Gastrocnemius medialis (tissue), 4 donors: ENCODE measurements at regions of chr9 and their contacts with region 1.

Region 1: GRCh38 chr9:101398068-101398929 is at the starts of genes MRPL50 and ZNF189:
- DNase-seq: peak; percentile 99
- ATAC-seq: peak; percentile 97 to 98
- H3K4me3 ChIP-seq: peak within 1 kb of the TSS; percentile 71 to 85 (median 78)
- H3K27ac ChIP-seq: peak within 1 kb of the TSS; percentile 86 to 97 (median 90)
- H3K4me1 ChIP-seq: peaks cover 37 to 49% of the 10 kb centered on the region in 2 donors
- H3K27me3 ChIP-seq: no peaks in the 10 kb centered on the region
- CTCF ChIP-seq: no peak
- POLR2A ChIP-seq: peak; percentile 66 to 79
- total RNA-seq, gene MRPL50: 6.3 to 13.7 (median 10.2) TPM
- total RNA-seq, gene ZNF189: 9.7 to 42.8 (median 12.2) TPM

Region 2: GRCh38 chr9:101229606-101230005 is 168.7 kb before region 1 on chr9:
- in situ Hi-C with region 1: no loop called
- intact Hi-C with region 1: no loop called
- DNase-seq: no peak
- ATAC-seq: no peak
- H3K4me3 ChIP-seq: no peak overlapping the region
- H3K27ac ChIP-seq: no peak overlapping the region
- H3K4me1 ChIP-seq: no peaks in the 10 kb centered on the region
- H3K27me3 ChIP-seq: no peaks in the 10 kb centered on the region
- CTCF ChIP-seq: no peak
- POLR2A ChIP-seq: no peak

Region 3: GRCh38 chr9:101449140-101449721 is 50.9 kb after region 1 on chr9:
- in situ Hi-C with region 1: no loop called
- intact Hi-C with region 1: loop called (anchors 2 kb)
- DNase-seq: peak; percentile 29 to 63
- ATAC-seq: peak; percentile 91 to 97
- H3K4me3 ChIP-seq: peak overlapping the region; percentile 58 to 79 (median 74)
- H3K27ac ChIP-seq: peak overlapping the region; percentile 37 to 80 (median 74)
- H3K4me1 ChIP-seq: no peaks in the 10 kb centered on the region
- H3K27me3 ChIP-seq: no peaks in the 10 kb centered on the region
- CTCF ChIP-seq: peak; percentile 42 to 76 (median 56)
- POLR2A ChIP-seq: no peak